Right lobe of liver (tissue), 6 donors: ENCODE measurements at regions of chrX and their contacts with region 1.

Region 1: DNA sequence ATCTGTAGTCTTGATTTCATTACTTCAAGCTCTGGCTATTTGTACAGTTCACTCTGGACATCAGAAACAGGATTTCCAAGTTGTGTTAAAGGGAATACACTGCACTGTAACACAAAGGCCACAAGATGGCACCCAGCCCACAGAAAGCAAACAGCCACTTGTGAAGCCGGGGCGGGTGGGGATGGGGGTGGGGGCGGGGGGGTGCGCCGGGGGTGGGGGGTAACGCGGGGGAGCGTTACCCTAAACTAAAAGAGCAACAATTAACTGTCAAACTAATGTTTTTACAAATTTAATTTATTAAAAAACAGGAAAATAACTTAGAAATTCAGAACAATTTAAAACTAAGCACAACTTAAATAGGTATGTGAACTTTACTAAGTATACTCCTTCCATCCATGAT is 27.3 kb downstream of the PRDX4 start:
- DNase-seq: peak; percentile 56 to 60 (median 58)
- ATAC-seq: peak; percentile 79 to 91 (median 88)
- H3K4me3 ChIP-seq: no peak overlapping the region
- H3K27ac ChIP-seq: no peak overlapping the region
- H3K4me1 ChIP-seq: no peaks in the 10 kb centered on the region
- H3K27me3 ChIP-seq: no peaks in the 10 kb centered on the region
- CTCF ChIP-seq: peak; percentile 33 to 59 (median 52)
- POLR2A ChIP-seq: no peak

Region 2: GRCh38 chrX:23907498-23908218 is 213.1 kb after region 1 on chrX and contains the starts of genes APOO and CXorf58:
- intact Hi-C with region 1: loop called in 1 of 2 experiments (anchors 10 kb)
- DNase-seq: peak; percentile 92 to 95 (median 93)
- ATAC-seq: peak; percentile 97 to 98 (median 97)
- H3K4me3 ChIP-seq: peak within 1 kb of the TSS; percentile 58 to 62 (median 59)
- H3K27ac ChIP-seq: peak within 1 kb of the TSS; percentile 26 to 84 (median 65)
- H3K4me1 ChIP-seq: no peaks in the 10 kb centered on the region
- H3K27me3 ChIP-seq: no peaks in the 10 kb centered on the region
- CTCF ChIP-seq: peak; percentile 66 to 84 (median 74)
- POLR2A ChIP-seq: no peak
- total RNA-seq, gene APOO: 9.8 to 17.3 (median 12.2) TPM
- total RNA-seq, gene CXorf58: not detected